ENCODE measurements at regions of chr6 and their contacts with region 1.

Region 1: GRCh38 chr6:99330159-99330558 is 19.3 kb downstream of the FAXC start:
- DNase-seq: peak; percentile 38
- H3K4me3 Mint-ChIP-seq: no peak overlapping the region
- H3K27ac Mint-ChIP-seq: no peak overlapping the region
- H3K4me1 Mint-ChIP-seq: peaks cover 11% of the 10 kb centered on the region
- H3K27me3 Mint-ChIP-seq: peaks cover 10% of the 10 kb centered on the region

Region 2: GRCh38 chr6:99364026-99364425 is 33.9 kb after region 1 on chr6:
- intact Hi-C with region 1: loop called (anchors 2 kb)
- DNase-seq: no peak
- H3K4me3 Mint-ChIP-seq: no peak overlapping the region
- H3K27ac Mint-ChIP-seq: peak overlapping the region; percentile 47
- H3K4me1 Mint-ChIP-seq: peaks cover 14% of the 10 kb centered on the region
- H3K27me3 Mint-ChIP-seq: peaks cover 4% of the 10 kb centered on the region

Region 3: DNA sequence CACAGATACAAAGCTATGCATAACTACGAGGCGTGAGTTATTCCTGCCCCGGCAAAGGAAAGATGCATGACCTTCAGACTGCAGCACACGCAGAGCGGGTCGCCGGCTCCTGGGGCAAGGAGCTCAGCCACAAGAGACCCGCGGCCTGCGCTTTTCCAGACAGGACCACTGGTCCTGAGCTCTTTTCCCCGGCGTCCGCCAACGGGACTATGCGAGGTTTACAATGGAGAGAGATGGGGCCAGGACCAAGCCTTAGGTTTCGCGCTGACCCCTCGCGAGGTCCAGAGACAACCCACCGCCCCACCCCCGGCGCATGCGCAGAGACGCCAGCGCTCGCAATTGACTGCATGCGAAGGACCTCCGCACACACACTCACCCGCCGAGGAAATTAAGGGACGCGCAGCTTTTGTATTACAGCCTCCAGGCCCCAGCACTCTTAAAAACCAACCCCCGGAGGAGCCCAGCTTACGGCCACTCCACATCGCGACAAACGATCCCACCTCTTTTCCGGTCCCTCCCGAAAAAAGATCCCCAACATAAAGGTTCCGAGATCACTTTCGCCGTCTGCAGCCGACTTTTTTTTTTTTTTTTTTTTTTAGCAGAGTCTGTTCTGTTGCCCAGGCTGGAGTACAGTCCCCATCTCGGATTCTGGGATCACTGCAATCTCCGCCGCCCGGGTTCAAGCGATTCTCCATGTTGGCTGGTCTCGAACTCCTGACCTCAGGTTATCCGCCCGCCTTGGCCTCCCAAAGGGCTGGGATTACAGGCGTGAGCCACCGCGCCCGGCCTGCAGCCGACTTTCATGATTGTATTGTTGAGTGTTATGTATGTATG is 63.8 kb after region 1 on chr6 and contains the start of gene COQ3:
- intact Hi-C with region 1: loop called (anchors 1 kb)
- DNase-seq: peak; percentile 56
- H3K4me3 Mint-ChIP-seq: peak within 1 kb of the TSS; percentile 94
- H3K27ac Mint-ChIP-seq: peak within 1 kb of the TSS; percentile 88
- H3K4me1 Mint-ChIP-seq: peaks cover 11% of the 10 kb centered on the region
- H3K27me3 Mint-ChIP-seq: no peaks in the 10 kb centered on the region
- total RNA-seq, gene COQ3: 13.5 and 16.7 TPM in 2 replicates

Region 4: GRCh38 chr6:99514089-99514488 is 183.9 kb after region 1 on chr6:
- intact Hi-C with region 1: loop called (anchors 2 kb)
- DNase-seq: no peak
- H3K4me3 Mint-ChIP-seq: peak overlapping the region; percentile 98
- H3K27ac Mint-ChIP-seq: no peak overlapping the region
- H3K4me1 Mint-ChIP-seq: peaks cover 32% of the 10 kb centered on the region
- H3K27me3 Mint-ChIP-seq: peaks cover 10% of the 10 kb centered on the region

Region 5: DNA sequence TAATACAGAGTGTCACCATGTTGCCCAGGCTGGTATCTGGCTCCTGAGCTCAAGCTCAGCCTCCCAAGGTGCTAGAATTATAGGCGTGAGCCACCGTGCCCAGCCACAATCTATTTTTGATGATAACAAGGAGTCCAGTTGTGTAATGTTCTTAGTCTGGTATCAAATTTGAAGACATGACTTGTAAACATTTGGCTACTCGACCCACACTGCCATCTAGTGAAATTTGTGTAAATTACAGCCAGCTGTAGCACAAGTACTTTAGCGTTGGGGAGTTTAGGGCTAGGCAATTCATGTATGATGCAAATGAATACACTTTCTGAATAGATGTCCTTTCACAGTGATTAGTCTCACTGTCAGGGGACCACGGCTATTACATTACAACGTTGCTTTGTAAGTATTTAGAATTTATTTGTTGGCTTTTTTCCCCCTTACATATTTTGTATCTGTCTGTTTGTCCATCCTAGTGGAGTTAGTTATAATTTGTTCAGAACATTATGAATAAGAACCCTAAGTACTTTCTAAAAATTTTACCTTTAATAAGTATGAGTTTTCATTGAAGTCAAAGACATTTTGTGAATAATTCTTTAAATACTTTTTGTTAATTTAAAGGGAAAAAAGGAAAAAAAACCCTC is 416.2 kb after region 1 on chr6:
- intact Hi-C with region 1: loop called (anchors 1 kb)
- DNase-seq: peak; percentile 45
- H3K4me3 Mint-ChIP-seq: no peak overlapping the region
- H3K27ac Mint-ChIP-seq: no peak overlapping the region
- H3K4me1 Mint-ChIP-seq: no peaks in the 10 kb centered on the region
- H3K27me3 Mint-ChIP-seq: peaks cover 26% of the 10 kb centered on the region